MCF 10A (cell line): ENCODE measurements at regions of chr7 and their contacts with region 1.

Region 1: GRCh38 chr7:23546897-23547572 is 15.3 kb upstream of the TRA2A start:
- DNase-seq: peak; percentile 88
- H3K4me3 Mint-ChIP-seq: no peak overlapping the region
- H3K27ac Mint-ChIP-seq: no peak overlapping the region
- H3K4me1 Mint-ChIP-seq: peaks cover 12% of the 10 kb centered on the region
- H3K27me3 Mint-ChIP-seq: no peaks in the 10 kb centered on the region
- CTCF ChIP-seq: peak; percentile 89

Region 2: DNA sequence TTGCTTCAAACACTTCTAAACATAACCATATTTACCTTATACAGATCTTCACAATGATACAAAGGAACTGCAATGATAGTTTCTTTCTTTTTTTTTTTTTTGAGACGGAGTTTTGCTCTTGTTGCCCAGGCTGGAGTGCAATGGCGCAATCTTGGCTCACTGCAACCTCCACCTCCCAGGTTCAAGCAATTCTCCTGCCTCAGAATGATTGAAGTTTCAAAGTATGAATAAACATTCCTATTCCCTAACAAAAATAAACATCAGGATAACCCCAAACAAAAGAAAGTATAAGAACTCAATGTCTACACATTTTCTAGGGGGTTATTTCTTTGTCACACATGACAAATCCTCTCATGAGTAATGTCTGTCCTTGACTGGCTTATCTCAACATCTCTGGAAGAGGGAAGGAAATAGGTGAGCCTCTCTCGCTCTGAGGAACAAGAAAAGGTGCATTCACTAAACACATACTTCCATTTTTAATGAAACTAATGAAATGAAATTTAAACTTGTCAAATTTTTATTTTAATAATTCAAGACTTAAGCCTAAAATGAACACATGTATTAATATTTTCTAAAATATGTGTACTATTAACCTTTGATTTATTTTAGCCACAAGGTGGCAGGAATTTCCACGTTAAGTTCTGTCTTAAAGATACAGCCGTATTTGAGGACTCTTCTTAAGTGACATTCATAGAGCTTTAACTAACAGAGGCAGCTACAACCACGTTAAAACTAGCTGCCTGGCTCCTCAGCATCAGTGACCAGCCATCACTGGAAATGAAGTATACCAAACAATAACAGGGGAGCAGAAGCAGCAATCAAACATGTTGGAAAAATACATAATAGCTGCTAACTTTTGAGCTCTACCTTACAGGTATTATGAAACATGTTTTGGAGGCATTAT is 189.6 kb before region 1 on chr7:
- CTCF ChIA-PET with region 1: interaction called, 38 read pairs
- POLR2A ChIA-PET with region 1: no interaction called
- intact Hi-C with region 1: loop called (anchors 1 kb)
- DNase-seq: peak; percentile 74
- H3K4me3 Mint-ChIP-seq: peak overlapping the region; percentile 41
- H3K27ac Mint-ChIP-seq: peak overlapping the region; percentile 35
- H3K4me1 Mint-ChIP-seq: peaks cover 14% of the 10 kb centered on the region
- H3K27me3 Mint-ChIP-seq: no peaks in the 10 kb centered on the region
- CTCF ChIP-seq: peak; percentile 52

Region 3: GRCh38 chr7:23531794-23532489 is 15.1 kb before region 1 on chr7 and contains the start of gene TRA2A:
- CTCF ChIA-PET with region 1: interaction called, 15 read pairs
- POLR2A ChIA-PET with region 1: interaction called, 3 read pairs
- intact Hi-C with region 1: no loop called
- DNase-seq: peak; percentile 96
- H3K4me3 Mint-ChIP-seq: peak within 1 kb of the TSS; percentile 95
- H3K27ac Mint-ChIP-seq: peak within 1 kb of the TSS; percentile 100
- H3K4me1 Mint-ChIP-seq: peaks cover 17% of the 10 kb centered on the region
- H3K27me3 Mint-ChIP-seq: no peaks in the 10 kb centered on the region
- CTCF ChIP-seq: no peak
- total RNA-seq, gene TRA2A: 92.9 and 113 TPM in 2 replicates

Region 4: DNA sequence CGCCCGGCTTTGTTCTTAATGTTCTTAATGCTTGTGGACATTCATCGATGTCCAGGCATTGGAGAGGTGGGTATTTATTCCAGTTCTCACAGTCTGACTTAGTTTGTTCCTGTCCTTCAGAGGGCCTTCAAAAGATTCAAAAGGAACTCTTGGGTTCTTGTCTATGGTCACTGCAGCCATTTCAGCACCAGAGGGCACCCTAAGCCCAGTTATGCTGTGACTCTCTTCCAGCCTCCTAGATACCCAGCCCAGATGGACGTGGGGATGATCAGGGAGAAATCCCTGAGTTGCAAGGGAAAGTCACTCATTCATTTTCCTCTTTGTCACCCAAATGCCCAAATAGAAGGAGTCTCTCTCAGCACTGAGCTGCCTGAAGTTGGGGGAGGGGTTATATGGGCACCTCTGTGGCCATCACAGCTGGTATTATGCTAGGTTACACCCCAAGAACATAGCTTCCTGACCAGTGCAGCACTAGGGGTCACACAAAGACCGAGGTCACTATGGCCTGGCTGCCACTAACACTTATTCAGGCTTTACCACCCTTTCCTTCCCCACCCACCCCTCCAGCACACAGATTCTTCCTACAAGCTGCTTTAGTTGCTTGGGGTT is 23.7 kb after region 1 on chr7:
- CTCF ChIA-PET with region 1: interaction called, 13 read pairs
- POLR2A ChIA-PET with region 1: interaction called, 4 read pairs
- intact Hi-C with region 1: loop called (anchors 1 kb)
- DNase-seq: peak; percentile 85
- H3K4me3 Mint-ChIP-seq: no peak overlapping the region
- H3K27ac Mint-ChIP-seq: no peak overlapping the region
- H3K4me1 Mint-ChIP-seq: no peaks in the 10 kb centered on the region
- H3K27me3 Mint-ChIP-seq: no peaks in the 10 kb centered on the region
- CTCF ChIP-seq: peak; percentile 90

Region 5: GRCh38 chr7:23633417-23633816 is 86.4 kb after region 1 on chr7:
- CTCF ChIA-PET with region 1: no interaction called
- POLR2A ChIA-PET with region 1: no interaction called
- intact Hi-C with region 1: no loop called
- DNase-seq: no peak
- H3K4me3 Mint-ChIP-seq: no peak overlapping the region
- H3K27ac Mint-ChIP-seq: no peak overlapping the region
- H3K4me1 Mint-ChIP-seq: no peaks in the 10 kb centered on the region
- H3K27me3 Mint-ChIP-seq: no peaks in the 10 kb centered on the region
- CTCF ChIP-seq: no peak

Region 6: GRCh38 chr7:23863209-23863798 is 316.3 kb after region 1 on chr7:
- CTCF ChIA-PET with region 1: no interaction called
- POLR2A ChIA-PET with region 1: no interaction called
- intact Hi-C with region 1: loop called (anchors 5 kb)
- DNase-seq: peak; percentile 50
- H3K4me3 Mint-ChIP-seq: no peak overlapping the region
- H3K27ac Mint-ChIP-seq: no peak overlapping the region
- H3K4me1 Mint-ChIP-seq: peaks cover 13% of the 10 kb centered on the region
- H3K27me3 Mint-ChIP-seq: no peaks in the 10 kb centered on the region
- CTCF ChIP-seq: peak; percentile 80